Ascending aorta (tissue), 2 donors: ENCODE measurements at regions of chr1 and their contacts with region 1.

Region 1: DNA sequence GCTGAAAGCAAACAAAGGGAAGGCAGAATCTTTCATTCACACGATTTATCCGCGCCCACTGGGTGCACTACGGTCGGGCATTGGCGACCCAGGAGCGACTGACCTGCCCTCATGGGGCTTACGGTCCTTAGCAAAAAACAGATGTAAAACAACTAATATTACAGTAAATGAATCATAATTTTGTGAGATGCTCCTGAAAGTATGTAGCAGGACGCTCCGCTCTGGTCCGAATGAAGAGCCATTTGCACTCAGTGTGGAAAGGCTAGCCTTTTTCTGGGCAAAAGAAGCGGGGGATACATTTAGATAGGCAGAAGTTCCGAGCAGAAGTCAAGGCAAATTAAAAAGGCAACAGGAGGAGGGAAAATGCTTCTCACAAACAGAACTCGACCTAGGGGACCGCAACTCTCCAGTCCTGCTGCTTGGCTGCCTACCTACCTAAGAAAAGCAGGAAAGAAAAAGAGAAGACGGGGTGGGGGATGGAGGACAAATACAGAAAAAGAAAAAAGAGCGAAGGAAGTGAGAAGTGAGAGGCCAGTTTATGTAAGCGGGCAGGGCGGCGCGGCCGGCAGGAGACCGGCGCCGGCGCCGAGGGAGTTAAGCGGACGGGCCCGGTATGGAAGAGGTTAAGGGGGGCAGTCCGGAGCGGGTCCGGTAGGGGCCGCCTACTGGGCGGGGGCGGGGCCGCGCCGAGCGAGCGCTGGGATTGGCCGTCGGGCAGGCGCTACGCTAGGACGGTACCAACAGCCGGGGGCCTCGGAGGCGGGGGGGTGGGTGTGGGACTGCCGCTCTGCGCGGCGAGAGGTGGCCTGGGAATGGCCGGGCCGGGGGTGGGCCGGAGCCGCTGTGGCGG is at the start of gene FAM20B:
- DNase-seq: peak; percentile 68 to 96
- H3K4me3 ChIP-seq: peak within 1 kb of the TSS; percentile 91 to 97
- H3K27ac ChIP-seq: peak within 1 kb of the TSS; percentile 95 to 97
- H3K4me1 ChIP-seq: peaks cover 0 to 3% of the 10 kb centered on the region in 2 donors
- H3K27me3 ChIP-seq: no peaks in the 10 kb centered on the region
- CTCF ChIP-seq: no peak
- total RNA-seq, gene FAM20B: 17.3 TPM

Region 2: GRCh38 chr1:177809819-177810218 is 1215.5 kb before region 1 on chr1:
- intact Hi-C with region 1: no loop called
- DNase-seq: no peak
- H3K4me3 ChIP-seq: no peak overlapping the region
- H3K27ac ChIP-seq: no peak overlapping the region
- H3K4me1 ChIP-seq: no peaks in the 10 kb centered on the region
- H3K27me3 ChIP-seq: no peaks in the 10 kb centered on the region
- CTCF ChIP-seq: no peak

Region 3: DNA sequence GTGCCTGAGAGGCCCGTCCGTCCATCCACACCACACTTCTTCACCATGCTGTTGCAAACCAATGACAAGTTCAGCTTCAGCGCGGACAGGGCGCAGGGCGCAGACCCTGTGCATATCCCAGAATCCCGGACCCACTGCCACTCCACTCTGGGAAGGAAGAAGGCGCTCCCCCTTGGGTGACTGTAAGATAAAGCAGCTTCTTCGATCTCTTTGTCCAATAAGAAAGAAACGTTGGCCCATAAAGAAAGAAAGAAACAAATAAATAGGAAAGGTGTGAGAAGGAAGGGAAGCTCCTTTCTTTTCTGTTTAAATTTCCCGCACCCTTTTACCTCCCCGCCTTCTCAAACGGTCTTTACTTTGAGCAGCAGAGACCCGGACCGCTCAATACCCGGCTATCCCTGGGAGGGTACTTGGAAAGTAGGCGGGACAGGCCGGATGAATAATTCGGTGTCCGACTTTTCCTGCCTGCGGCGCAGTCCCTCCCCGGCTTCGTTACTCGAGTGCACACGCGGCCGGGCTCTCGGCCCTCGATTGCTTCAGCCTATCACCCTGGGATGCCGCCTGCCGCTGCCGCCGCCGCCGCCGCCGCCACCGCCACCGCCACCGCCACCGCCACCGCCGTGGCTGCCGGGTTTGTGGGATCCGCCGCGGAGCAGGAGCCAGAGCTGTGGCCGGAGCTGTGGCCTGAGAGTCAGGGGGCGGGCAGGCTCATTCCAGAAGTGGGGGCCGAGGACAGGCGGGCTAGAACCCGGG is 932.0 kb before region 1 on chr1:
- intact Hi-C with region 1: loop called (anchors 10 kb)
- DNase-seq: peak; percentile 64 to 94
- H3K4me3 ChIP-seq: peak overlapping the region; percentile 78 to 84
- H3K27ac ChIP-seq: peak overlapping the region; percentile 86 to 97
- H3K4me1 ChIP-seq: peaks cover 4 to 8% of the 10 kb centered on the region in 2 donors
- H3K27me3 ChIP-seq: no peaks in the 10 kb centered on the region
- CTCF ChIP-seq: no peak

Region 4: GRCh38 chr1:178344513-178345082 is 680.8 kb before region 1 on chr1:
- intact Hi-C with region 1: loop called (anchors 10 kb)
- DNase-seq: no peak
- H3K4me3 ChIP-seq: peak overlapping the region; percentile 9 to 23
- H3K27ac ChIP-seq: peak overlapping the region; percentile 71 to 73
- H3K4me1 ChIP-seq: peaks cover 5 to 37% of the 10 kb centered on the region in 2 donors
- H3K27me3 ChIP-seq: no peaks in the 10 kb centered on the region
- CTCF ChIP-seq: peak; percentile 35 to 57 (median 45)

Region 5: DNA sequence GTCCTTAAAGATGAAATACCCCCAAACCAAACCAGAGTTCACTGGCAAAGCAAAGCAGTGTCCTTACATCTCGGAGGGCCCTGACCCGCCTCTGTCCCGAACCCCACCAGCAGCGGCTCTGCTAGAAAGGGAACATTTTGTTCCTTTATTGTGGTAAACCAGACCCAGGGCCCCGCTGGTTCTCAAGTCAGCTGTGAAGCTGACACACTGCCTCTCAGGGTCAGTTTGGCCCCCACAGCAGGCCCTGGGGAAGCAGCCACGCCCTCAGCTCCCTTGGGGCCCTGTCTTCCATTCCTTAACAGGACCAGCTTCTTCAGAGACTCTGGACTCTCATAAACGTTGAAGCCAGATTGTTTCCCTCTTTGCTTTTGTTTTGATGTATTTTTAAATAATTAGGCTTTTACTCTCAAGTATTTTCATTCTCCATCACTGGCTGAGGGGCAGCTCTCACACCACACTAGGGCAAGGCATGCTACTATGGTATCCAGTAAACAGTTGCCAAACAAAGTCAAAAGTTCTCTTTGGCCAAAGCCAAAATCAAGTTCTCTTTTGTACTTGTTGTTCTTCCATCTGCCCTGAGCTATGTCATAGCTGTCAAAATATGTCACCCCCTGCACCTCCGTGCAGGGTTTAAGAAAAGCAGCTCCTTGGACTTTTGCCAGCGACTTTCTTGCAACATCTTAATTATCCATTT is 93.3 kb before region 1 on chr1:
- intact Hi-C with region 1: loop called (anchors 5 kb)
- DNase-seq: peak in 1 of 2 donors; percentile 93
- H3K4me3 ChIP-seq: no peak overlapping the region
- H3K27ac ChIP-seq: peak overlapping the region; percentile 84 to 86
- H3K4me1 ChIP-seq: peaks cover 22 to 33% of the 10 kb centered on the region in 2 donors
- H3K27me3 ChIP-seq: no peaks in the 10 kb centered on the region
- CTCF ChIP-seq: no peak

Region 6: GRCh38 chr1:178976541-178976940 is 48.8 kb before region 1 on chr1:
- intact Hi-C with region 1: no loop called
- DNase-seq: no peak
- H3K4me3 ChIP-seq: no peak overlapping the region
- H3K27ac ChIP-seq: no peak overlapping the region
- H3K4me1 ChIP-seq: no peaks in the 10 kb centered on the region
- H3K27me3 ChIP-seq: no peaks in the 10 kb centered on the region
- CTCF ChIP-seq: no peak

Region 7: GRCh38 chr1:179190861-179191260 is 165.5 kb after region 1 on chr1:
- intact Hi-C with region 1: no loop called
- DNase-seq: no peak
- H3K4me3 ChIP-seq: no peak overlapping the region
- H3K27ac ChIP-seq: peak overlapping the region in 1 of 2 donors; percentile 4
- H3K4me1 ChIP-seq: no peaks in the 10 kb centered on the region
- H3K27me3 ChIP-seq: no peaks in the 10 kb centered on the region
- CTCF ChIP-seq: no peak

Region 8: DNA sequence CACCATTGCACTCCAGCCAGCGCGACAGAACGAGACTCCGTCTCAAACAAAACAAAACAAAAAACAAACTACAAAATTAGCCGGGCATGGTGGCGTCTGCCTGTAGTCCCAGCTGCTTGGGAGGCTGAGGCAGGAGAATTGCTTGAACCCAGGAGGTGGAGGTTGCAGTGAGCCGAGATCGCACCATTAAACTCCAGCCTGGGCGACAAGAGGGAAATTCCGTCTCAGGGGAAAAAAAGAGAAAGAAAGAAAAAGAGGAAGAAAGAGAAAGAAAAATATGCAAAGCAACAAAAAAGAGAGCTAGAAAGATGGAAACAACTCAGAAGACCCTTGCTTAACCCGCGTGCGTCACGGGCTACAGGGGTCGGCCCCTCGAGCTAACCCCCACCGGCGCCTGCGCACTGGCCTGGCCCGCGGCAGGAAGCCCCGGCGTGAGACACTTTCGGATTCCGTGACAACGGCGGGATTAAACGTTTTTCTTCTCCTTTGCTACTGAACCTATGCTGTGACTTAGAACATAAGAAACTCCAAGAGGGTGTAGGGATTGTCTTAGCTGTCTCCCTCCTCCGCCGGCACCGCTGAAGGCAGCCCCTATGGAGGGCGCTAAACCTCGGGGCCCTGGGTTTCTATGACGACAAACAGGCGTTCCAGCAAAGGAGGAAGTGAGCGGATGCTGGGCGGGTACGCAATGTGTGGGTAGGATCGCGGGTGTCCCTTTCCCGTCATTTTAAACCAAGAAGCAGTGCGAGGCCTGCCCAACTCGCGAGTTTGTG is 340.2 kb after region 1 on chr1 and contains the start of gene AXDND1:
- intact Hi-C with region 1: loop called (anchors 5 kb)
- DNase-seq: peak; percentile 54 to 93
- H3K4me3 ChIP-seq: peak within 1 kb of the TSS; percentile 62 to 70
- H3K27ac ChIP-seq: peak within 1 kb of the TSS; percentile 84 to 95
- H3K4me1 ChIP-seq: peaks cover 0 to 6% of the 10 kb centered on the region in 2 donors
- H3K27me3 ChIP-seq: no peaks in the 10 kb centered on the region
- CTCF ChIP-seq: no peak
- total RNA-seq, gene AXDND1: not detected